ENCODE measurements at regions of chr4 and their contacts with region 1.

Region 1: GRCh38 chr4:139919521-139919920 is 234.5 kb downstream of the MAML3 start:
- DNase-seq: peak in 1 of 2 donors; percentile 33
- ATAC-seq: peak in 7 of 8 donors; percentile 58 to 87 (median 80)
- H3K4me3 ChIP-seq: peak overlapping the region in 1 of 10 donors; percentile 15
- H3K27ac ChIP-seq: peak overlapping the region; percentile 35 to 88 (median 76)
- H3K4me1 ChIP-seq: peaks cover 15 to 88% (median 66%) of the 10 kb centered on the region in 9 donors
- H3K27me3 ChIP-seq: no peaks in the 10 kb centered on the region
- CTCF ChIP-seq: no peak

Region 2: DNA sequence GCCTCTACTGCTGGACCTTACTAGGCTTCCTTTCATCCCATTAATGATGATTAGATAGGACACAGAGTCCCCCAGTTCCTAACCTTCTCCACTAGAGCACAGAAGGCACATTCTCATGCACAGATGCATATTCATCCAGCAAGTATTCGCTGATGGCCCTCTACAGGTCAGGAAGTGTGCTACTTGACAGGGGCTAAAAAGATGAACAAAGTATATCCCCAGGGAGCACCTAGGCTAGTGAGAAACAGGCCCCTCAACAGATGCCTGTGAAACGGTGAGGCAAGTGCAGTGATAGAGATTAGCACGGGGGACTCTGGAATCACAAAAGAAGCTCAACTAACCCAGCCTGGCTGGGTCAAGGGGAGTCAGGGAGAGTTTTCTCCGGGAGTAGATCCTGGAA is 158.1 kb before region 1 on chr4:
- intact Hi-C with region 1: loop called in 2 of 10 experiments (anchors 5 to 10 kb)
- DNase-seq: no peak
- ATAC-seq: peak in 5 of 8 donors; percentile 9 to 19 (median 17)
- H3K4me3 ChIP-seq: no peak overlapping the region
- H3K27ac ChIP-seq: peak overlapping the region in 8 of 10 donors; percentile 20 to 95 (median 90)
- H3K4me1 ChIP-seq: peaks cover 21 to 66% (median 48%) of the 10 kb centered on the region in 9 donors
- H3K27me3 ChIP-seq: no peaks in the 10 kb centered on the region
- CTCF ChIP-seq: peak in 7 of 9 donors; percentile 11 to 52 (median 39)

Region 3: GRCh38 chr4:139815778-139816601 is 103.5 kb before region 1 on chr4:
- intact Hi-C with region 1: loop called in 1 of 10 experiments (anchors 5 kb)
- DNase-seq: peak; percentile 38 to 56
- ATAC-seq: peak; percentile 76 to 94 (median 89)
- H3K4me3 ChIP-seq: peak overlapping the region; percentile 16 to 58 (median 50)
- H3K27ac ChIP-seq: peak overlapping the region in 9 of 10 donors; percentile 49 to 87 (median 79)
- H3K4me1 ChIP-seq: peaks cover 5 to 66% (median 31%) of the 10 kb centered on the region in 9 donors
- H3K27me3 ChIP-seq: no peaks in the 10 kb centered on the region
- CTCF ChIP-seq: no peak

Region 4: DNA sequence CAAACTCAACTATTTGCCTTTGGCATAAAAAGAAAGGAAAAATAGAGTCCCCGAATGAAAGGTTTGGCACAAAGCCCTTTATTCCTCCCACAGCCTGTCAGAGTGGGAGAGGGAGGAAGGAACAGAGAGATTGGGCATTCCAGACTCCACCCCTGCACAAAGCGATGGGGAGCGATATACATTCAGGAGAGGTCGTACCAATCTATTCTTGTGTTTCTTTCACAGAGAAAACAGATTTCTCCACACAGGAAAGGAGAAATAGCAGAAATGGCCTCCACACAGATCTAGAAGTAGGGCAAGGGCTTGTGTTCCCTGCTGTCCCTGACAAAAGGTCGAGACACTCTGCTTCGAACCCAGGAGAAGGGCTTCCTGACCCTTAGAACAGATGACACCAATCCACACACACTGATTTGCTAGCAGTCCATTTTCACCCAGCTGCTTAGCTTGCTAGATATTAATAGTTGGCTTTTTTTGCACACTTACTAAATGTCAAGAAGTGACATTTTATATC is 37.0 kb after region 1 on chr4:
- intact Hi-C with region 1: loop called in 1 of 10 experiments (anchors 5 kb)
- DNase-seq: peak in 1 of 2 donors; percentile 34
- ATAC-seq: peak in 7 of 8 donors; percentile 34 to 73 (median 67)
- H3K4me3 ChIP-seq: peak overlapping the region in 5 of 10 donors; percentile 3 to 32 (median 24)
- H3K27ac ChIP-seq: peak overlapping the region in 3 of 10 donors; percentile 1 to 29 (median 6)
- H3K4me1 ChIP-seq: peaks cover 0 to 29% (median 17%) of the 10 kb centered on the region in 9 donors
- H3K27me3 ChIP-seq: no peaks in the 10 kb centered on the region
- CTCF ChIP-seq: no peak

Region 5: DNA sequence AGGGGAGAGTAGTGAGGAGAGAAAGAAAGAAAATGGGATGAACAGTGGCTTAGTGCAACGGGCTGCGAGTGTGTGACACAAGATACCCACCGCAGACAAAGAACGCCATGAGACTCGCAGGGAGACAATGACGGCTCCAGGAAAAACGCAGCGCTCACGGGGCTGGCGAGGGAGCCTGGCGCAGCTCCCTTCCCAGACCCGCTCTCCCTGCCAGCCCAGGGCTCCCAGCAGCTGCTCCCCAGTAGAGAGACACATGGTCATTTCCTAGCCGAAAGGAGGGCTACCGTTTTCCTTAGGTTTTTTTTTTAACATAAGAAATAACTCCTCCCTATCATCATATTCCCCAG is 85.0 kb after region 1 on chr4:
- intact Hi-C with region 1: loop called in 2 of 10 experiments (anchors 5 to 10 kb)
- DNase-seq: peak; percentile 46 to 64
- ATAC-seq: peak; percentile 85 to 96 (median 93)
- H3K4me3 ChIP-seq: peak overlapping the region in 9 of 10 donors; percentile 38 to 55 (median 51)
- H3K27ac ChIP-seq: peak overlapping the region in 8 of 10 donors; percentile 8 to 73 (median 58)
- H3K4me1 ChIP-seq: peaks cover 6 to 40% (median 18%) of the 10 kb centered on the region in 9 donors
- H3K27me3 ChIP-seq: no peaks in the 10 kb centered on the region
- CTCF ChIP-seq: no peak